ENCODE measurements at regions of chr3 and their contacts with region 1.

Region 1: DNA sequence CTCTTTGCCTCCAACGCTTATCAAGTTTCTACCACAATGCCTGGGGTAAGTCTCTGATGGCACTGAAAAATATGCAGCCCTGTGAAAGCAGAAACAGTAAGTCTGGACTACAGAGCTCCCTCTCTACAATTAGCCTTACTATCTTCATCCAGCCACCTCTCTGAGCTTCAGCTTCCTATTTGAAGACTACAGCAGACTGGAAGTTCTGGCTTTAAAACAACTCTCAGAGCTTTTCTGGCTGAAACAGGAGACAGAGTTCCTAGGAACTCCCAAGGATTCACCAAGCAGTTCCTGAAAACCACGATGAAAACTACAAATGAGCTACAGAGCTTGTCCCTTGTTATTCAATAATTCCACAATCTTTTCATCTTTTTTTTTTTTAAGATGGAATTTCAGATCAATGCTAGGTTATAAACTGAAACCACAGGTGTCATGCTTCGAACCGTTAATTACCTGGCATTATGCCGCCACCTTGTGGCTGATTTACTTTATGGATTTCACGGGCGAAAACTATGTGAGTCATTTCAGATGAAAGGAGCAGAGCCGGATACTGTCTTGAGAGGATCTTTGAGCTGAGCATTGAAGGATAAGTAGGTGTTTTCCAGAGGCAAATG is 3.9 kb downstream of the CRYGS start:
- H3K4me3 ChIP-seq: no peak overlapping the region
- H3K27ac ChIP-seq: no peak overlapping the region
- H3K4me1 ChIP-seq: no peaks in the 10 kb centered on the region; the same call in 1 of the 2 replicates
- CTCF ChIP-seq: peak; percentile 26; the same call in 1 of the 2 replicates

Region 2: DNA sequence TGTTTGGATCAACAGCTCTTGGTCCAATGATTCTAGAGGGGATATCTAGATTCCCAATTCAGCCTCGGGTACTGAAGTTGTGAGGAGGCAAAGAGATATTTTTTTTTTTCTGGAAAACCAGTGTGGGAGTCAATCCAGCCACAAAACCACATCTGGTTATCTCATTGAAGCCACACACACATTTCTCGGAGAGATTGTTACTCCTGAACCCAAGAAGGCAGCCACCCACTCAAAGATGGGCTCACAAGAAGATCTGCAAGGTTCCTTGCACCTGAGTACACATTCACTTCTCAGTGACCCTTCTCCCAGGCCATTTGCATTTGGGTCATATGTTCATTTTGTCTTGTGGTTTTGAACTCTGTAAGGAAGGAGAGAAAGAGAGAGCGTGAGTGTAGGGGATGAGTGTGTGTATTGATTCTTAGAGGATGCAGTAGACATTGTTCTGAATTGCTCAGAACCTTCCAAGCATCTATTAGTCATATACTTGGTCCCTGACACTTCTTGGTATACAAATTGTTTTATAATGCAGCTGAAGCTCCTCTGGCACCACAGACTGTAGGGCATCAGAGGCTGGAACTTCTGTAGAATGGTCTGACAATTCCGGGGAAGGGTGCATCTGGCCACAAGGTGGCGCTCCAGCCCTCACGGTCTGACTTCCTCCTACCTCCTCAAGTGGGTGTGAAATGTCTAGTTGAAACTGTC is 563.2 kb before region 1 on chr3:
- CTCF ChIA-PET with region 1: interaction called, 27 read pairs
- POLR2A ChIA-PET with region 1: no interaction called
- H3K4me3 ChIP-seq: no peak overlapping the region
- H3K27ac ChIP-seq: no peak overlapping the region
- H3K4me1 ChIP-seq: no peaks in the 10 kb centered on the region
- CTCF ChIP-seq: peak; percentile 52

Region 3: GRCh38 chr3:186259612-186260383 is 280.5 kb before region 1 on chr3:
- CTCF ChIA-PET with region 1: interaction called, 81 read pairs
- POLR2A ChIA-PET with region 1: no interaction called
- H3K4me3 ChIP-seq: no peak overlapping the region
- H3K27ac ChIP-seq: no peak overlapping the region
- H3K4me1 ChIP-seq: no peaks in the 10 kb centered on the region
- CTCF ChIP-seq: peak; percentile 58; the same call in 1 of the 2 replicates

Region 4: DNA sequence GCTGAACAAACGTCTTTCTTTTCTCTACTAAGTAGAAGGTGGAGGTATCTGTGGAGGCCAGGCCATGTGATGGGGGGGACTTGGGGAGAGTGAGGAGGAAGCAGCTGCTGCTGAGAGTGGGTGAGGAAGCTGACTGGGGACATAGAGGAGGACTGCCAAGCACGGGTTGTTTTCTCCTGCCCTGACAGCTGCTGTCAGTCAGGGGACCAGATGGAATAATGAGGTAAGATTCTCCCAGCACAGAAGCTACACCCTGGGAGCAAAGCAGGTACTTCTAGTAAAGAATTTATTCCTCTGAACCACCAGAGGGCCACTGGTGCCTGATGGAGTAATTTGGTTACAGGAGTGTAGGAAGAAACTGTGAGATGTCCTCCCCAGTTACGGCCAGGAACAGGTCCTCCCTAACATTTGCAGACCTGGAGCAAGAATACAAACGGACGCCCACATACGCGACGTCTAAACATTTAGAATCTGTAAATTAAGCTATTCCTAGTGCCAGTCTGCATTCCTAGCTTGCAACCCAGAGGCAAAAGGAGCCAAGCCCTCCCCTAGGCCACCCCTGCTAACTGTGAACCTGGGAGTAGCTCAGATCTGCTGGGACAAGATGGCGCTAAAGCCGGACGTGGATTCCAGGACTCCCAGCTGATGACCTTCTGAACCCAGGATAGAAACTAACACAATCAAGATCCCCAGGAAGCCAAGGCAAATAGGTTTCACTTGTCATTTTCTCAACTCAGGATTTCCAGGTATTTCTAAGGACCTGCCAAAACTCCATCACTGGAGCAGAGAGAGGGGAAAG is 10.9 kb before region 1 on chr3:
- CTCF ChIA-PET with region 1: interaction called, 20 read pairs
- POLR2A ChIA-PET with region 1: no interaction called
- H3K4me3 ChIP-seq: no peak overlapping the region
- H3K27ac ChIP-seq: no peak overlapping the region
- H3K4me1 ChIP-seq: no peaks in the 10 kb centered on the region
- CTCF ChIP-seq: no peak

Region 5: DNA sequence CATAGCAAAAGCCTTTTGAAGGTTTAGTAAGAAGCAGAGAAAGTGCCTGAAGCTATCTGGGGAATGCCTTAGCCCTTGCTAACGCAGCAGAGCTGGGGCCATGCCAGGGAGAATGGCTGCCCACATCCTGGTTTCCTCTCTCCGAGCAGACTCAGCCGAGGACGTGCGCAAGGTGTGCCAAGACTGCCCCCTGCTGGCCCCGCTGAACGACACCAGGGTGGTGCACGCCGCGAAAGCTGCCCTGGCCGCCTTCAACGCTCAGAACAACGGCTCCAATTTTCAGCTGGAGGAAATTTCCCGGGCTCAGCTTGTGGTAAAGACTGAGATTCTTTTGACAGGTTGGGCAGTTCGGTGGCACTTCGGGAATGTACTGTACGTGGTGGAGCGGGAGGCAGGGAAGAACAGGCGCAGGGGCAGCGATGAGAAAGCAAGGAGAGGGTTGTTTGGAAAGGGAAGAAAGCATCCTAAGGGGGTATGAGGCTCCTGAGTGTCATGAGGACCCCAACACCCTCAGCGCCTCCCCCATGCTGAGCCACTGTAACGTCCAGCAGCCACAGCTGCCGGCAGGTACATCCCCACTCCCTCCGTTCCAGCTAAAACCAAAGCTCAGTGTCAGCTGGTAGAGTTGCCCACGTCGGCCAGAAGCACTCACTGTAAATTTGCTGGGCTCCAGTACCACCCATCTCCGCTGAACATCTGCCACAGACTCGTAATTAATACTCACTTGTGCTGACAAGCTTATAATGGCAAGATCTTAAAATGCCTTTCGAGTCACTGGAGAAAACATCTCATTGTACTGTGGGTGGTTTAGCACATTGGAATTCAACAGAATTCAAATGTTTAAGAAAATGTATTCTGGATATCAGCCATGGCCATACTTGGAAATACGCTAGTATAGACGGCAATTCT is 77.0 kb after region 1 on chr3:
- CTCF ChIA-PET with region 1: interaction called, 15 read pairs
- POLR2A ChIA-PET with region 1: no interaction called
- H3K4me3 ChIP-seq: peak overlapping the region; percentile 4; the same call in 1 of the 2 replicates
- H3K27ac ChIP-seq: no peak overlapping the region
- H3K4me1 ChIP-seq: no peaks in the 10 kb centered on the region
- CTCF ChIP-seq: peak; percentile 81

Region 6: DNA sequence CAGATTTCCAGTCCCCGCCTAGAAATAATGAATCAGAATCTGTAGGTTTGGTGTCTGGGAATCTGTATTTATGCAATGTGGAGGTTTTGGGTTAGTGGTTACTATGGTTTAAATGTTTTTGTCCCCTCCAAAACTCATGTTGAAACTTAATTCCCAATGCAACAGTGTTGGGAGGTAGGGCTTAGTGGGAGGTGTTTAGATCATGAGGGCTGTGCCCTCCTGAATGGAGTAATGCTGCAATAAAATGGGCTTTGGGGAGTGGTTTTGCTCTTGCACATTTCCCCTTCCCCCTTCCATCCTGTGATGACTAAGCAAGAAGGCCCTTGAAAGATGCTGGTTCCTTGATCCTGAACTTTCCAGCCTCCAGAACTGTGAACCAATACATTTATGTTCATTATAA is 275.1 kb after region 1 on chr3:
- CTCF ChIA-PET with region 1: no interaction called
- POLR2A ChIA-PET with region 1: no interaction called
- H3K4me3 ChIP-seq: no peak overlapping the region
- H3K27ac ChIP-seq: no peak overlapping the region
- H3K4me1 ChIP-seq: no peaks in the 10 kb centered on the region
- CTCF ChIP-seq: no peak

Measured in HEK293 (cell line).